Activated B cell treated with CpG ODN at 0.5 μM for 24 hours (primary cell): ENCODE measurements at regions of chr5 and their contacts with region 1.

Region 1: GRCh38 chr5:32312647-32313523 is at the start of gene MTMR12:
- DNase-seq: peak; percentile 100
- ATAC-seq: peak; percentile 89
- H3K4me3 Mint-ChIP-seq: peak within 1 kb of the TSS; percentile 90
- H3K27ac Mint-ChIP-seq: peak within 1 kb of the TSS; percentile 91
- H3K4me1 Mint-ChIP-seq: peaks cover 41% of the 10 kb centered on the region
- H3K27me3 Mint-ChIP-seq: no peaks in the 10 kb centered on the region
- CTCF ChIP-seq: no peak
- total RNA-seq, gene MTMR12: 26.8 and 36.3 TPM in 2 replicates

Region 2: GRCh38 chr5:32174011-32174870 is 138.6 kb before region 1 on chr5 and contains the start of gene GOLPH3:
- CTCF ChIA-PET with region 1: interaction called, 3 read pairs
- POLR2A ChIA-PET with region 1: interaction called, 11 read pairs
- intact Hi-C with region 1: loop called (anchors 1 kb)
- DNase-seq: peak; percentile 86
- ATAC-seq: peak; percentile 89
- H3K4me3 Mint-ChIP-seq: peak within 1 kb of the TSS; percentile 96
- H3K27ac Mint-ChIP-seq: peak within 1 kb of the TSS; percentile 92
- H3K4me1 Mint-ChIP-seq: peaks cover 40% of the 10 kb centered on the region
- H3K27me3 Mint-ChIP-seq: no peaks in the 10 kb centered on the region
- CTCF ChIP-seq: no peak
- total RNA-seq, gene GOLPH3: 55.5 and 60.1 TPM in 2 replicates

Region 3: DNA sequence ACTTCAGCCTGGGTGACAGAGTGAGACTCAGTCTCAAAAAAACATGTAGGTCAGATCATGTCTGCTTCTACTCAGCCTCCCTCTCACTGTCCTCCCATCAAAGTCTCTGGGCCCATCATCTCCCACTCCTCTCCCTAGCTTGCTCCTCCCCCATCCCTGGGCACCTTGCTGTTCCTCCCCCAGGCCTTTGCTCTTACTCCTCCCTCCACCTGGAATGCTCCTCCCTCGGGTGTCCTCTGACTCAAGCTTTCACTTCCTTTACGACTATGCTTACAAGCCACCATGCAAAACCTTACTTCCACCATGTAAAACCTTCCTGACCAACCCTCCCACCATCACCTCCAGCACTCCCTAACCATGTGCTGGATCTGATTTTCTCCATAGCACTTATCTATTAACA is 51.7 kb before region 1 on chr5:
- CTCF ChIA-PET with region 1: no interaction called
- POLR2A ChIA-PET with region 1: no interaction called
- intact Hi-C with region 1: loop called (anchors 5 kb)
- DNase-seq: no peak
- ATAC-seq: peak; percentile 79
- H3K4me3 Mint-ChIP-seq: no peak overlapping the region
- H3K27ac Mint-ChIP-seq: peak overlapping the region; percentile 69
- H3K4me1 Mint-ChIP-seq: peaks cover 17% of the 10 kb centered on the region
- H3K27me3 Mint-ChIP-seq: no peaks in the 10 kb centered on the region
- CTCF ChIP-seq: no peak

Region 4: GRCh38 chr5:32290922-32291321 is 22.0 kb before region 1 on chr5:
- CTCF ChIA-PET with region 1: no interaction called
- POLR2A ChIA-PET with region 1: interaction called, 4 read pairs
- intact Hi-C with region 1: loop called (anchors 1 kb)
- DNase-seq: peak; percentile 41
- ATAC-seq: peak; percentile 95
- H3K4me3 Mint-ChIP-seq: peak overlapping the region; percentile 68
- H3K27ac Mint-ChIP-seq: peak overlapping the region; percentile 85
- H3K4me1 Mint-ChIP-seq: peaks cover 63% of the 10 kb centered on the region
- H3K27me3 Mint-ChIP-seq: no peaks in the 10 kb centered on the region
- CTCF ChIP-seq: no peak

Region 5: DNA sequence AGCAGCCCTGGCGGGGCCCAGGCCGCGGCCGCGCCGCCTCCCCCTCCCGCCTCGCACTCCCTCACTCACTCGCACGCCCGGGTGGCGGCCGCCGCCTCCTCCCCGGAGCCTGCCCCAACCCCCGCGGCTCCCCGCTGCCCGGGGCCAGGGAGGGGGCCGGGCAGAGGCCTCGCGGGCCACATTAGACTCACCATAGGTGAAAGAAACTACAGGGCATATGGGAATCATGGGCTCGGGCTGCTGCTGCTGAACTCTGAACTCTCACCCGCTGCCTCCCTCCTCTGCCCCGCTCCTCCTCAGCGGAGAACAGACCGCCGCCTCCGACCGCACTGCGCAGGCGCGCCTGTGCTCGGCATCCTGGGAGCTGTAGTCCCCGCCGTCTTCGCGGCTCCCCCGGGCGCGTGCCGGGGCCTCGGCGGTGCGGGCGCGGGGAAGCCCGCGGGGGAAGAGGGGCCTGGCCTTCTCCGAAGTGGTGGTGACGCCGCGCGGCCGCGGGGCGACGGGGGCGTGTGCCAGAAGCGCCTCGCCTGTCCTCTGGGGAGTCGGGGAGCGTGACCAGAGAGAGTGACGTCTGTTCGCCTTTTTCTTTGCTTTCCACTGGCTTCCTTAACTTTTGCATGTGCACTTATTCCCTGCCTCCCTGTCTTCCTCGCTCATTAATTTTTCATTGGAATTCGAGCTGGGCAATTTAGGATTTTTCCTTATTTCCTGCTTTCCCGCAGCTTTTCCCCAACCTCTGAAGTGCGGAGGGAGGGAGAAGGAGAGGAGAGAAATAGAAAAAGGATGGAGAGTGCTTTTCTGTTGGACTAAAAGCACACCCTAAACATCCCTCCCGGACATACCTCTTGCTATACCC is 131.8 kb after region 1 on chr5 and contains the start of gene ZFR:
- CTCF ChIA-PET with region 1: no interaction called
- POLR2A ChIA-PET with region 1: no interaction called
- intact Hi-C with region 1: loop called (anchors 1 kb)
- DNase-seq: peak; percentile 90
- ATAC-seq: peak; percentile 85
- H3K4me3 Mint-ChIP-seq: peak within 1 kb of the TSS; percentile 92
- H3K27ac Mint-ChIP-seq: peak within 1 kb of the TSS; percentile 92
- H3K4me1 Mint-ChIP-seq: peaks cover 60% of the 10 kb centered on the region
- H3K27me3 Mint-ChIP-seq: no peaks in the 10 kb centered on the region
- CTCF ChIP-seq: no peak
- total RNA-seq, gene ZFR: 60.2 and 64.3 TPM in 2 replicates

Region 6: GRCh38 chr5:32578363-32578762 is 265.5 kb after region 1 on chr5:
- CTCF ChIA-PET with region 1: no interaction called
- POLR2A ChIA-PET with region 1: no interaction called
- intact Hi-C with region 1: no loop called
- DNase-seq: no peak
- ATAC-seq: no peak
- H3K4me3 Mint-ChIP-seq: no peak overlapping the region
- H3K27ac Mint-ChIP-seq: no peak overlapping the region
- H3K4me1 Mint-ChIP-seq: peaks cover 69% of the 10 kb centered on the region
- H3K27me3 Mint-ChIP-seq: no peaks in the 10 kb centered on the region
- CTCF ChIP-seq: no peak